Mammary epithelial cell (primary cell): ENCODE measurements at regions of chr10 and their contacts with region 1.

Region 1: DNA sequence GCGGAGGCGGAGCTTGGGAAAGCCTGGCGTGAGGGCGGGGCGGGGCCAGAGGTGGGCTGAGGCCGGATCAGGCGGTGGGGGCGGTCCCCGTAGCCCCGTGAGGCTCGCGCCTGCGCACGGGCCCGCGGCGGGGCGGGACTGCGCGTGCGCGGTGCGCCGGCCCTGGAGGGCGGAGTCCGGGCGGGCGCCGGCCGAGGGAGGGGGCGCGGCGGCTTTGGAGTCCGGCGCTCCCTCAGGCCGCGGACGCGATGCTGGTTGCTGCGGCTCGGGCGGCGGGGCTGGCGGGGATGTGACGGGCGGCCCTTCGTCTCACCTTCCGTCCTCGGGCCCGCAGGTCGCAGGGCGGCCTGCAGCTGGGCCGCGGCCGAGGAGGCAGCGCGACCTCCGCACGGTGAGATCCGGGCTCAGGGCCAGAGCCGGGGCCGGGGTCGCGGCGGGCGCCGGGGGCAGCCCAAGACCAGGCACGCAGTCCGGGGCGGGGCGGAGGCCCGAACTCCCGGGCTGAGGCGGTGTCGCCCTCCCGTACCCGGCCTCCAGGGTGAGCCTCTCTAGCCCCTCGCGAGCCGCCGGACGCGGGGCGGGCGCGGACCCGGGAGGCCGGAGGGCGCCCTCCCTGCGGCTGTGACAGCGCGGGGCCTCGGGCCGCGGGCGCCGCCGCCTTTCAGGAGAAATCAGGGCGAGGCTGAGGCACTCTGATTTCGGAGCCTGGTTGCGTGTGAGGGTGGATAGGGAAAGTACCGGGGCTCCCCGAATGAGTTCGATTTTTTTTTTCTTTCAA is at the start of gene CCSER2:
- DNase-seq: peak; percentile 87
- H3K4me3 ChIP-seq: peak within 1 kb of the TSS; percentile 69 to 87 (median 74)
- H3K27ac ChIP-seq: peak within 1 kb of the TSS; percentile 85
- H3K4me1 ChIP-seq: peaks cover 16% of the 10 kb centered on the region
- H3K27me3 ChIP-seq: no peaks in the 10 kb centered on the region
- CTCF ChIP-seq: no peak
- total RNA-seq, gene CCSER2: 45.3 to 73.3 TPM

Region 2: GRCh38 chr10:84269773-84270172 is 58.8 kb before region 1 on chr10:
- CTCF ChIA-PET with region 1: interaction called, 12 read pairs
- dilution Hi-C with region 1: no loop called
- in situ Hi-C with region 1: no loop called
- intact Hi-C with region 1: loop called (anchors 1 kb)
- DNase-seq: peak; percentile 79
- H3K4me3 ChIP-seq: no peak overlapping the region
- H3K27ac ChIP-seq: no peak overlapping the region
- H3K4me1 ChIP-seq: peaks cover 8% of the 10 kb centered on the region
- H3K27me3 ChIP-seq: peaks cover 2% of the 10 kb centered on the region
- CTCF ChIP-seq: no peak